Activated CD4-positive, alpha-beta memory T cell treated with anti-CD3 and anti-CD28 coated beads for 36 hours (primary cell): ENCODE measurements at regions of chr5 and their contacts with region 1.

Region 1: GRCh38 chr5:98787131-98787719 is 13.8 kb downstream of the RGMB start:
- DNase-seq: no peak
- H3K4me3 Mint-ChIP-seq: no peak overlapping the region
- H3K27ac Mint-ChIP-seq: no peak overlapping the region
- H3K4me1 Mint-ChIP-seq: peaks cover 17% of the 10 kb centered on the region
- H3K27me3 Mint-ChIP-seq: no peaks in the 10 kb centered on the region

Region 2: GRCh38 chr5:98804066-98804465 is 16.8 kb after region 1 on chr5:
- CTCF ChIA-PET with region 1: no interaction called
- POLR2A ChIA-PET with region 1: no interaction called
- intact Hi-C with region 1: loop called (anchors 1 kb)
- DNase-seq: no peak
- H3K4me3 Mint-ChIP-seq: no peak overlapping the region
- H3K27ac Mint-ChIP-seq: no peak overlapping the region
- H3K4me1 Mint-ChIP-seq: no peaks in the 10 kb centered on the region
- H3K27me3 Mint-ChIP-seq: no peaks in the 10 kb centered on the region